Mammary epithelial cell (primary cell): ENCODE measurements at regions of chr7 and their contacts with region 1.

Region 1: GRCh38 chr7:73738612-73739374 is at the start of gene ABHD11:
- DNase-seq: peak; percentile 96
- H3K4me3 ChIP-seq: peak within 1 kb of the TSS; percentile 59 to 84 (median 73)
- H3K27ac ChIP-seq: peak within 1 kb of the TSS; percentile 82
- H3K4me1 ChIP-seq: peaks cover 9% of the 10 kb centered on the region
- H3K27me3 ChIP-seq: no peaks in the 10 kb centered on the region
- CTCF ChIP-seq: no peak
- total RNA-seq, gene ABHD11: 6.7 to 23.6 TPM

Region 2: DNA sequence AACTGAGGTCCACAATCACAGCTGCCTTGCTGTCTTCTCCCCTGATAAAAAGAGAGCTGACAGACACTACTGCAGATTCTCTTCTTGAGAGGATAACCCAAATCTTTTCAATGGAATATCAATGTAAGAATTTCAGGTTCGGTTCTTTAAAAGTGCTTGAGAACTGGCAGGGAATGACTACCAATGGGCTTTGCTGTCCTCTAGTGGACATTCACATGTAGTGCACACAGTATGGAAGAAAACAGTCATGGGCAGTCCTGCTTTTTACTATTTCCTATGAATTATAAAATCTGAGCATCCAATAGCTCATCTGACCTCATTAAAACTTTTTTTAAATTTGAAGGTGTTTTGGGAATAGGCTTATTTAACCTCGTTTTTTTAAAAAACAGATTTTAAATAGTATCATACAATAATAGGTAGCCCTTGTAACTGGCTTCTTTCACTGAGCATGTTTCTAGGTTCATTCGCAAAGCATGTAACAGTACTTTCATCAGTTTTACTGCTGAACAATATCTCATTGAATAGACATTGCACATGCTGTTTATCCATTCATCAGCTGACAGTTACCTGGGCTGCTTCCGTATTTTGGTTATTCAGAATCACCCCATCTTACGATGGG is 286.9 kb before region 1 on chr7:
- CTCF ChIA-PET with region 1: no interaction called
- dilution Hi-C with region 1: no loop called
- in situ Hi-C with region 1: no loop called
- intact Hi-C with region 1: loop called (anchors 10 kb)
- DNase-seq: peak; percentile 24
- H3K4me3 ChIP-seq: no peak overlapping the region
- H3K27ac ChIP-seq: no peak overlapping the region
- H3K4me1 ChIP-seq: no peaks in the 10 kb centered on the region
- H3K27me3 ChIP-seq: no peaks in the 10 kb centered on the region
- CTCF ChIP-seq: peak; percentile 97 to 100

Region 3: DNA sequence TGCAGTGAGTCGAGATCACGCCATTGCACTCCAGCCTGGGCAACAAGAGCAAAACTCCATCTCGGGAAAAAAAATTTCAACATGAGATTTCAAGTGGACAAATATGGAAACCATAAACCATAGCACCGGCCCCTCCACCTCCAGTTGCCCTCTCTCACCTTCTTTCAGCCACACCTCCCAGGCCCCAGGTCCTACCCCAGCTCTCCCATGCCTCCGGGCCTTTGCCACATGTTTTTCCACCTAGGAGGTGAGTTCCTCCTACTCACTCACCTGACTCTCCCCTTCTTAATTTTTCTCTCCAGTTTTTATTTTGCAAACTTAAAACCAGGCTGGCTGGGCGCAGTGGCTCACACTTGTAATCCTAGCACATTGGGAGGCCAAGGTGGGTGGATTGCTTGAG is 78.3 kb after region 1 on chr7:
- CTCF ChIA-PET with region 1: no interaction called
- dilution Hi-C with region 1: no loop called
- in situ Hi-C with region 1: no loop called
- intact Hi-C with region 1: no loop called
- DNase-seq: no peak
- H3K4me3 ChIP-seq: no peak overlapping the region
- H3K27ac ChIP-seq: no peak overlapping the region
- H3K4me1 ChIP-seq: peaks cover 5% of the 10 kb centered on the region
- H3K27me3 ChIP-seq: no peaks in the 10 kb centered on the region
- CTCF ChIP-seq: no peak

Region 4: DNA sequence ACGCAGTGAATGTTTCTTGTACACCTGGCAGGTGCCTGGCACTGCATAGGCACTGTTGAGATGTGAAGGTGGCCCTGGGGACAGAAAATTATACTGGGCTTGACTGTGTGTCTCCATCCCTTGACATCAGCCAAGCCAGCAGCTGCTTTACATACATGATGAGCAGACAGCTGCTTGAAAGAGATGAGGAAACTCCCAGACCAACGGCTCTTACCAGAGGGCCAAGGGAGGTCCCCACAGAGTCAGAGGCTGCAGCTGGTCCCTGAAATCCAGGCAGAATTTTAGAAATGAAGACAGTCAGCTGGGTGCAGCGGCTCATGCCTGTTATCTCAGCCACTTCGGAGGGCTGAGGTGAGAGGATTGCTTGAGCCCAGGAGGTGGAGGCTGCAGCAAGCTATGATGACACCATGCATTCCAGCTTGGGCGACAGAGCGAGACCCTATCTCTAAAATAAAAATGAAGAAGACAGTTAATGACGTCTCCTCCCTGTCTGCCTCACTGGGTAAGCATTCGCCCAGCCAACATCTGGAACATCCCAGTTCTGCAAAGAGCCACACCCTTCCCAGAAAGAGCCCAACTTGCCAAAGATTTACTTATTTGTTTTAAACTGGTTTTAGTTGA is 362.4 kb after region 1 on chr7:
- CTCF ChIA-PET with region 1: no interaction called
- dilution Hi-C with region 1: no loop called
- in situ Hi-C with region 1: no loop called
- intact Hi-C with region 1: no loop called
- DNase-seq: no peak
- H3K4me3 ChIP-seq: no peak overlapping the region
- H3K27ac ChIP-seq: no peak overlapping the region
- H3K4me1 ChIP-seq: peaks cover 19% of the 10 kb centered on the region
- H3K27me3 ChIP-seq: no peaks in the 10 kb centered on the region
- CTCF ChIP-seq: no peak